ENCODE measurements at regions of chr3 and their contacts with region 1.

Region 1: DNA sequence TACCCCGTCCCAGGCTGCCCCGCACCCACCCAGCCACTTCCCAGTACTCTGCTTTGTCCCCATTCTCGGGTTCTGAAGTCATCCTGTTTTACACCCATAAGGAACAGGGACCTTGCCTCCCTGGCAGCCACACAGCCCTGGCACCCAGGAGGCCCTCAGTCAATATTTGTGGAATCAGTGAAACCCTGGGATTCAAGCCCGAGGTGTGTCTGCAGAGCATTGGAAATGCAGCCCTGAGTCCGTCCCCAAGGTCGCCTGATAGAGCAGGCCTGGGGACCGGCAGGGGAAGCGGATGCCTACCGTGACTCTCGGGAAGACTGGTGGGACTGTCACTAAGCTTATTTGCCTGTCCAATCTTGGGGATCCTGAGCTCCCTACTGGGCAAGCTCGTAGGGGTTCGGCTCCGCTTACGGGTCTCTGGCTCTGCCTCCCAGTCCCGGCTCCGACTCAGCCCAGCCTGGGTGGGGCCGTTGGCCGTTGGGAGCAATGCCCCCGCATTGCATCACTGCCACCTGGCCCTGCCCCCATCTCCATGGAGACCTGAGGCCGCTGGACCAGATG is 64.4 kb upstream of the TAMM41 start:
- DNase-seq: no peak
- ATAC-seq: no peak
- H3K4me3 Mint-ChIP-seq: no peak overlapping the region
- H3K27ac Mint-ChIP-seq: no peak overlapping the region
- H3K4me1 Mint-ChIP-seq: no peaks in the 10 kb centered on the region
- H3K27me3 Mint-ChIP-seq: no peaks in the 10 kb centered on the region
- CTCF ChIP-seq: no peak

Region 2: DNA sequence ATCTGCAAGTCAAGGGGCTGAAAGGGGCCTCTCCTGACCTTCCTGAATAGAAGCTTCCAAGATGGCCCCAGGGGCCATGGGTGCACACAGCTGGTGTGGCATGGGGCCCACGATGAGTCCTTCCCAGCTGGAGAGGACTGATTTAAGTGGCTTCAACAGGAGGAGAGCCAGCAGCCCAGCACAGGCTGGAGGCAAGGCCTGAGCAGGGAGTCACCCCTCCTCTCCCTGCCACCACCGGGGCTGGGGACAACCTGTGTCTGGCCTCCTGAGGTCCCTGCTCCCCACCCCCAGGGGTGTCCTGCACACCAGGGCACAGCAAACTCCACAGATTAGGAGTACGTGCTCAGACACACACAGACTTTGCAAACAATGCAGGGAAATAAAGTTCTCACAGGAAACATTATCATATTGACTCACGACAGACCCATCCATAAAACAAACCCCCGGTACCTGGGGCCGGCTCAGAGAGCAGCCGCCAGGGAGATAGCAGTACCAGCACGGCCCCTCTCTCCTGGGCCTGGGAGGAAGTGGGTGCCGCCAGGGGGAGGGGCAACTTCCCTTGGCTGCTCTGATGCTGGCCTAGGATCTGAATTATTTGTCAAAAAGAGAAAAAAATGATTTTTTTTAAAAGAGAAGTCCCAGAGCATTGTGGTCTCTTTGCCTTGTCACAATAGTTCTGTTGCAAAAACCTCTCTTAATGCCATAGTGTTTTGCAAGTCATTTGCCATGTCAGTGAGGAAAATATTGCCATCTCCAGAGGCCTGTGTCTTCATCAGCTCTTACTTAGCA is 551.3 kb after region 1 on chr3:
- CTCF ChIA-PET with region 1: no interaction called
- POLR2A ChIA-PET with region 1: no interaction called
- intact Hi-C with region 1: no loop called
- DNase-seq: peak; percentile 55
- ATAC-seq: peak; percentile 78
- H3K4me3 Mint-ChIP-seq: peak overlapping the region; percentile 13
- H3K27ac Mint-ChIP-seq: peak overlapping the region; percentile 82
- H3K4me1 Mint-ChIP-seq: peaks cover 19% of the 10 kb centered on the region
- H3K27me3 Mint-ChIP-seq: no peaks in the 10 kb centered on the region
- CTCF ChIP-seq: no peak

Region 3: GRCh38 chr3:12875857-12876836 is 965.1 kb after region 1 on chr3:
- CTCF ChIA-PET with region 1: no interaction called
- POLR2A ChIA-PET with region 1: no interaction called
- intact Hi-C with region 1: loop called (anchors 10 kb)
- DNase-seq: peak; percentile 24
- ATAC-seq: peak; percentile 81
- H3K4me3 Mint-ChIP-seq: no peak overlapping the region
- H3K27ac Mint-ChIP-seq: no peak overlapping the region
- H3K4me1 Mint-ChIP-seq: no peaks in the 10 kb centered on the region
- H3K27me3 Mint-ChIP-seq: peaks cover 9% of the 10 kb centered on the region
- CTCF ChIP-seq: peak; percentile 41